ENCODE measurements at regions of chr13 and their contacts with region 1.

Region 1: GRCh38 chr13:46160471-46161066 is 21.4 kb downstream of the LCP1 start:
- DNase-seq: peak; percentile 54 to 77 (median 73)
- H3K4me3 ChIP-seq: peak overlapping the region; percentile 2 to 23
- H3K4me3 Mint-ChIP-seq: peak overlapping the region; percentile 12 to 87 (median 82)
- H3K27ac ChIP-seq: peak overlapping the region; percentile 73
- H3K27ac Mint-ChIP-seq: peak overlapping the region; percentile 84 to 96 (median 94)
- H3K4me1 ChIP-seq: peaks cover 54% of the 10 kb centered on the region
- H3K4me1 Mint-ChIP-seq: peaks cover 44 to 59% (median 51%) of the 10 kb centered on the region in 4 donors
- H3K27me3 ChIP-seq: no peaks in the 10 kb centered on the region
- H3K27me3 Mint-ChIP-seq: no peaks in the 10 kb centered on the region

Region 2: DNA sequence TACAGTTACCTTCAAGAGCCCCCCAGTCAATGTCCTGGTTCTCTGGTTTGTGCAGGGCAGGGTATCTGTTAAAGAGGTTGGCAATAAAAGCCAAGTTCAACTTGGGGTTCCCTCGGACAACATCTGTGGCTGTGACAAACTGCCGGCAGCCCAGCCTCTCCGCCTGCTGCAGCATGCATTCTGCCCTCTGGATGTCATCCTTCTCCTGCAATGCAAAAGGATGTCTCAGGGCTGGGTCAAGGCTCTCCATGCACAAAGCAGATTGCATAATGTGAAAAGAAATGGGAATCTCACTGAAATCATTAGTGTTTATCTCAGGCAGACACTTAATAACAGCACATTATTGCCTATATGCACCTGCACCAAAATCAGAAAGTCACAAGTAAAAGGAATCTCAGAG is 13.7 kb before region 1 on chr13:
- CTCF ChIA-PET with region 1: interaction called, 16 read pairs
- POLR2A ChIA-PET with region 1: interaction called, 9 read pairs
- intact Hi-C with region 1: no loop called
- DNase-seq: no peak
- H3K4me3 ChIP-seq: no peak overlapping the region
- H3K4me3 Mint-ChIP-seq: no peak overlapping the region
- H3K27ac ChIP-seq: no peak overlapping the region
- H3K27ac Mint-ChIP-seq: peak overlapping the region in 4 of 7 donors; percentile 42 to 64 (median 53)
- H3K4me1 ChIP-seq: peaks cover 7% of the 10 kb centered on the region
- H3K4me1 Mint-ChIP-seq: peaks cover 22 to 36% (median 27%) of the 10 kb centered on the region in 4 donors
- H3K27me3 ChIP-seq: no peaks in the 10 kb centered on the region
- H3K27me3 Mint-ChIP-seq: no peaks in the 10 kb centered on the region

Region 3: GRCh38 chr13:46553886-46554858 is 393.6 kb after region 1 on chr13:
- CTCF ChIA-PET with region 1: no interaction called
- POLR2A ChIA-PET with region 1: no interaction called
- intact Hi-C with region 1: no loop called
- DNase-seq: peak; percentile 70 to 85 (median 75)
- H3K4me3 ChIP-seq: peak overlapping the region; percentile 67 to 87
- H3K4me3 Mint-ChIP-seq: peak overlapping the region; percentile 94 to 98 (median 96)
- H3K27ac ChIP-seq: peak overlapping the region; percentile 79
- H3K27ac Mint-ChIP-seq: peak overlapping the region; percentile 92 to 97 (median 94)
- H3K4me1 ChIP-seq: peaks cover 38% of the 10 kb centered on the region
- H3K4me1 Mint-ChIP-seq: peaks cover 38 to 63% (median 45%) of the 10 kb centered on the region in 4 donors
- H3K27me3 ChIP-seq: no peaks in the 10 kb centered on the region
- H3K27me3 Mint-ChIP-seq: peaks cover under 1 to 1% of the 10 kb centered on the region in 2 donors